HCT116 (cell line): ENCODE measurements at regions of chr16 and their contacts with region 1.

Region 1: DNA sequence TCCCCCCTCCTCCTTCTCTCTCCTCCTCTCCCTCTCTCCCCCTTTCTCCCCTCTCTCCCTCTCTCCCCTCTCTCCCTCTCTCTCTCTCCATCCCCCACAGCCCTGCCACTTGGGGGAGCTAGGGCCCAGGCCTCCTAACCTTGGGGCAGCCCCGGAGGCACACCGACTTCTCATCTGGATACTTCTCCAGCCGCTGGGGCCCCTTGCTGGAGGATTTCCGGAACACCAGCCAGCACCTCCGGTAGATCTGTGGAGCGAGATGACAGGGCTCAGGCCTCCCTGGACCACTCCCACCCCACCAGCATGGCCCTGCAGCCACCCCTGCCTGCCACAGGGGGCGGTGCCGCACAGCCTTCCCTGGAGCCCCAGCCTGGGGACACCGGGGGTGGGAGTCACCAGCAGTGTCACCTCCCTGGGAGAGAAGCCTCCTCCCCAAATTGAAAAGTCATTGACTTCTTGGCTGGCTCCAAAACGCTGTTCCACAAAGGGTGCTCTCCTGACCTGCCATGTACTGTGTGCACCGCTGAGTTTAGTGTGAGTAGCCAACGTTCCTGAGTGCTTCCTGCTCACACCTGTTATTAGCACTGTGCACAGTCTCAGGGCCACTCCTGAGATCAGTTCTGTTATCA is 10.5 kb downstream of the DOK4 start:
- DNase-seq: peak; percentile 24
- ATAC-seq: peak; percentile 94
- H3K4me3 ChIP-seq: no peak overlapping the region
- H3K27ac ChIP-seq: peak overlapping the region; percentile 42
- H3K4me1 ChIP-seq: peaks cover 19 to 31% of the 10 kb centered on the region in 2 experiments; a peak in 3 of 4 replicates
- H3K27me3 ChIP-seq: no peaks in the 10 kb centered on the region
- CTCF ChIP-seq: peak; percentile 70 to 83 (median 82); a peak in 4 of 6 replicates
- POLR2A ChIP-seq: no peak
- RAD21 ChIP-seq: no peak; the same call in 1 of the 2 replicates

Region 2: DNA sequence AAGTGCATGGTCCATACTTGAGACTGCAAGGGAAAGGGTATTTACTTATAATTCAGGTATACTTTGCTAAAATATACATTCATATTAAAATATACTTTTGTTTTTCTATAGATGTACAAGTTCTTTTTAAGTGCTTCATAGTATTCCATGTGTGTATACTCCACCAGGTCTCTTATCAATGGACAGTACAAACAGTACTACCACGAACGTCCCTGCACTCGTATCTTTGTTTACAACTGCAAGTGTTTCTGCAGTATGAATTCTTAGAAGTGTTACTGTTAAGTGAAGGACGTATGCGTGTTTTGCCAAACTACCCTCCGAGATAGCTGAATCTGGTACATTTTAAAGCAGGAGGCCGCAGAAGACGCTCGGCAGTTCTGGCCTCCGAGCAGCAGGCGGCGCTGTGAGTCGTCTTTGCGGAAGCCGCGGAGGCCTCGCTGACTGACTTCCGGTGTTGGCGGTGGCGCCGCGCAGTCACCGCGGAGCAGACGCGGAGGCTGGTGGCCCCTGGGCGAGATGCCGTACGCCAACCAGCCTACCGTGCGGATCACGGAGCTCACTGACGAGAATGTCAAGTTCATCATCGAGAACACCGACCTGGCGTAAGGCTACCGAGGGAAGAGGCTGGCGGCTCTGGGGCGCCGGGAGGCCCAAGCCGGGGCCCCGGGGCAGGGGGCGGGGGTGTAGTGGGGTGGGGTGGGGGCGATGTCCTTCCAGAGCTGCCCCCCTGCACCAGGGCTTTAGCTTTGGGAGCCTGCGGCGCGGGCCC is 13.4 kb before region 1 on chr16 and contains the start of gene POLR2C:
- CTCF ChIA-PET with region 1: interaction called, 10 read pairs
- POLR2A ChIA-PET with region 1: interaction called, 7 read pairs
- RAD21 ChIA-PET with region 1: no interaction called
- intact Hi-C with region 1: no loop called
- DNase-seq: peak; percentile 72
- ATAC-seq: peak; percentile 94
- H3K4me3 ChIP-seq: peak within 1 kb of the TSS; percentile 82 to 94
- H3K27ac ChIP-seq: peak within 1 kb of the TSS; percentile 61
- H3K4me1 ChIP-seq: peaks cover 8 to 10% of the 10 kb centered on the region in 2 experiments; a peak in 3 of 4 replicates
- H3K27me3 ChIP-seq: no peaks in the 10 kb centered on the region
- CTCF ChIP-seq: peak; percentile 62 to 83 (median 80); a peak in 5 of 6 replicates
- POLR2A ChIP-seq: peak; percentile 92
- RAD21 ChIP-seq: no peak
- total RNA-seq, gene POLR2C: 74.4 TPM

Region 3: GRCh38 chr16:57519796-57520360 is 44.1 kb after region 1 on chr16:
- CTCF ChIA-PET with region 1: no interaction called
- POLR2A ChIA-PET with region 1: no interaction called
- RAD21 ChIA-PET with region 1: interaction called in 1 of 2 experiments, 3 read pairs
- intact Hi-C with region 1: loop called (anchors 1 kb)
- DNase-seq: peak; percentile 41
- ATAC-seq: peak; percentile 98
- H3K4me3 ChIP-seq: no peak overlapping the region
- H3K27ac ChIP-seq: no peak overlapping the region
- H3K4me1 ChIP-seq: no peaks in the 10 kb centered on the region
- H3K27me3 ChIP-seq: no peaks in the 10 kb centered on the region
- CTCF ChIP-seq: peak; percentile 95 to 99 (median 98)
- POLR2A ChIP-seq: no peak
- RAD21 ChIP-seq: peak; percentile 95

Region 4: GRCh38 chr16:57576429-57576870 is 100.6 kb after region 1 on chr16:
- CTCF ChIA-PET with region 1: no interaction called
- POLR2A ChIA-PET with region 1: no interaction called
- RAD21 ChIA-PET with region 1: no interaction called
- intact Hi-C with region 1: no loop called
- DNase-seq: peak; percentile 38
- ATAC-seq: peak; percentile 92
- H3K4me3 ChIP-seq: no peak overlapping the region
- H3K27ac ChIP-seq: no peak overlapping the region
- H3K4me1 ChIP-seq: no peaks in the 10 kb centered on the region
- H3K27me3 ChIP-seq: no peaks in the 10 kb centered on the region
- CTCF ChIP-seq: peak; percentile 93 to 98 (median 97)
- POLR2A ChIP-seq: no peak
- RAD21 ChIP-seq: peak; percentile 96